ENCODE measurements at regions of chr11 and their contacts with region 1.

Region 1: GRCh38 chr11:83087035-83087434 is 15.3 kb upstream of the RAB30 start:
- DNase-seq: no peak
- ATAC-seq: peak; percentile 56; the same call in 2 of the 3 replicates
- H3K4me3 ChIP-seq: no peak overlapping the region
- H3K27ac ChIP-seq: no peak overlapping the region
- H3K4me1 ChIP-seq: peaks cover 6 to 9% of the 10 kb centered on the region in 2 experiments; a peak in 3 of 5 replicates
- H3K27me3 ChIP-seq: no peaks in the 10 kb centered on the region
- CTCF ChIP-seq: peak; percentile 6 to 45 (median 13); a peak in 2 of 6 replicates
- EP300 ChIP-seq: no peak
- POLR2A ChIP-seq: no peak
- RAD21 ChIP-seq: peak; percentile 31 to 54; a peak in 3 of 4 replicates

Region 2: GRCh38 chr11:83071567-83072349 is 15.3 kb before region 1 on chr11 and contains the start of gene RAB30:
- CTCF ChIA-PET with region 1: no interaction called
- POLR2A ChIA-PET with region 1: interaction called, 11 read pairs
- in situ Hi-C with region 1: no loop called
- intact Hi-C with region 1: no loop called
- DNase-seq: peak; percentile 91 to 99 (median 94)
- ATAC-seq: peak; percentile 97
- H3K4me3 ChIP-seq: peak within 1 kb of the TSS; percentile 68
- H3K27ac ChIP-seq: peak within 1 kb of the TSS; percentile 86
- H3K4me1 ChIP-seq: peaks cover 12% of the 10 kb centered on the region in 2 experiments; a peak in 2 of 5 replicates
- H3K27me3 ChIP-seq: no peaks in the 10 kb centered on the region
- CTCF ChIP-seq: no peak; a peak in 1 of 6 replicates
- EP300 ChIP-seq: peak; percentile 23; the same call in 1 of the 2 replicates
- POLR2A ChIP-seq: peak; percentile 97
- RAD21 ChIP-seq: peak; percentile 11 to 38; a peak in 3 of 4 replicates
- polyA plus RNA-seq, gene RAB30: 0.68 to 1.0 TPM

Region 3: DNA sequence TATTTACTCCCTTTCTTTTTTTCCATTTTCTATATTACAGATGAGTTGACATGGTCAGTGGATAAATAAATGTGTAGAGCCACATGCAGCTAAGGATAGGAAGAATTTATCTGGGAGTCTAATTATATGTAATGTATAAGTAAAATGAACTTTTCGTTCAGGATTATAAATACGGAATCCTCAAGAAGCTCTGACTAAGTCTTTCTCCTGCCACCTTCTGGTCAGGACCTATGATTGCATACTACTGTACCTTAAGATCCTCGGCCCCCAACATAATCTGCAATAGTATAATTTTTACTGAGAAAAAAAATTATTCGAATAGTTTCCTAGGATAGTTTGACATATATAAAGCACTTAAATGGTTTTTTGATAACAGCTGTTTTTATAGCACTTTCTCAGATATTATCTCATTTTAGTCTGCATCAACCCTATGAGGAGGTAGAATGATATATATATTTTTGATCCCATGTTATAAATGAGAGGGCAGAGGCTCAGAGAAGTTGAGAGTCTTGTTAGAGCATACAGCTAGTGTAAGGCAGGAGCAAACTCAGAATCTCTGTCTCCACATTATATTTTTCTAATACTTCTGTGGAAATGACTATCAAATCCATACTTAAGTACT is 163.0 kb after region 1 on chr11:
- CTCF ChIA-PET with region 1: interaction called, 19 read pairs
- POLR2A ChIA-PET with region 1: no interaction called
- in situ Hi-C with region 1: no loop called
- intact Hi-C with region 1: loop called (anchors 1 kb)
- DNase-seq: peak; percentile 47 to 61 (median 50)
- ATAC-seq: peak; percentile 92
- H3K4me3 ChIP-seq: no peak overlapping the region
- H3K27ac ChIP-seq: no peak overlapping the region
- H3K4me1 ChIP-seq: no peaks in the 10 kb centered on the region
- H3K27me3 ChIP-seq: no peaks in the 10 kb centered on the region
- CTCF ChIP-seq: peak; percentile 46 to 77 (median 55); a peak in 5 of 6 replicates
- EP300 ChIP-seq: no peak
- POLR2A ChIP-seq: no peak
- RAD21 ChIP-seq: peak; percentile 73 to 81

Region 4: DNA sequence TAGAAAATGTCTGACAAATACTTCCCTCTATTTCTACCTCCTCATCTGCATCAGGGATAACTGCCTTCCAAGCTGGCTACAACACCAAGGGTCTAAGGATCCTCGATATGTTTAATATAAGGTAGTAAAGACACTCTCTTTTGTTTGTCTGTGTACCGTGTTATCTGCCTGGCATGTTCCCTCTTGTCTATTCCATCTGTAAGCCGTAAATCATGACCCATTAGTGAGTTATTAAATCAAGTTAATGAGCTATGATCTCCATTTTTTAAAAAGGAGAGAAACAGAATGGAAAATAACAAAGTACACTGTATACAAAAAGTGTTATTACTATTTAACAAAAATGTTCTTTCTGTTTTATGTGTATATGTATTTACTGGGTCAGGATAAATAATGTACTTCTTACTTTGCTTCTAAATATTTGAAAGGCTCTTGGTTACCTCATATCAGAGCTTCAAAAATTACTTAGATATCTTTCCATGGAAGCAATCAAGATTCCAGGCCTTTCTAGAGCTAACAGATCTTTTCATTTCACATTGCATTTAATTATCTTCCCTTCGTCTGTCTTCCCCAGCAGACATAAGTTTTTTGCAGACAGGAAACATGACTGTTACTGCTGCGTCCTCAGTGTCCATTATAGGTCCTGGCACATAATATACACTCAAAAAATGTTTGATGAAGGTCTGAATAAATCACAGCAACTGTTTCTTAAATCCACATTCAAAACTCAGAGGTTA is 541.8 kb after region 1 on chr11:
- CTCF ChIA-PET with region 1: no interaction called
- POLR2A ChIA-PET with region 1: no interaction called
- in situ Hi-C with region 1: no loop called
- intact Hi-C with region 1: no loop called
- DNase-seq: no peak
- ATAC-seq: no peak
- H3K4me3 ChIP-seq: no peak overlapping the region
- H3K27ac ChIP-seq: no peak overlapping the region
- H3K4me1 ChIP-seq: no peaks in the 10 kb centered on the region
- H3K27me3 ChIP-seq: no peaks in the 10 kb centered on the region
- CTCF ChIP-seq: no peak
- EP300 ChIP-seq: no peak
- POLR2A ChIP-seq: no peak
- RAD21 ChIP-seq: no peak

Measured in K562 (cell line).